CD8-positive, alpha-beta memory T cell (primary cell): ENCODE measurements at regions of chr17 and their contacts with region 1.

Region 1: GRCh38 chr17:48878918-48879898 is 13.4 kb upstream of the ATP5MC1 start:
- DNase-seq: peak; percentile 28 to 72 (median 59)
- H3K4me3 ChIP-seq: no peak overlapping the region
- H3K4me3 Mint-ChIP-seq: no peak overlapping the region
- H3K27ac ChIP-seq: no peak overlapping the region
- H3K27ac Mint-ChIP-seq: no peak overlapping the region
- H3K4me1 ChIP-seq: no peaks in the 10 kb centered on the region
- H3K4me1 Mint-ChIP-seq: peaks cover 0 to 7% (median 3%) of the 10 kb centered on the region in 3 donors
- H3K27me3 ChIP-seq: peaks cover 4% of the 10 kb centered on the region
- H3K27me3 Mint-ChIP-seq: peaks cover 8 to 9% of the 10 kb centered on the region in 2 donors

Region 2: DNA sequence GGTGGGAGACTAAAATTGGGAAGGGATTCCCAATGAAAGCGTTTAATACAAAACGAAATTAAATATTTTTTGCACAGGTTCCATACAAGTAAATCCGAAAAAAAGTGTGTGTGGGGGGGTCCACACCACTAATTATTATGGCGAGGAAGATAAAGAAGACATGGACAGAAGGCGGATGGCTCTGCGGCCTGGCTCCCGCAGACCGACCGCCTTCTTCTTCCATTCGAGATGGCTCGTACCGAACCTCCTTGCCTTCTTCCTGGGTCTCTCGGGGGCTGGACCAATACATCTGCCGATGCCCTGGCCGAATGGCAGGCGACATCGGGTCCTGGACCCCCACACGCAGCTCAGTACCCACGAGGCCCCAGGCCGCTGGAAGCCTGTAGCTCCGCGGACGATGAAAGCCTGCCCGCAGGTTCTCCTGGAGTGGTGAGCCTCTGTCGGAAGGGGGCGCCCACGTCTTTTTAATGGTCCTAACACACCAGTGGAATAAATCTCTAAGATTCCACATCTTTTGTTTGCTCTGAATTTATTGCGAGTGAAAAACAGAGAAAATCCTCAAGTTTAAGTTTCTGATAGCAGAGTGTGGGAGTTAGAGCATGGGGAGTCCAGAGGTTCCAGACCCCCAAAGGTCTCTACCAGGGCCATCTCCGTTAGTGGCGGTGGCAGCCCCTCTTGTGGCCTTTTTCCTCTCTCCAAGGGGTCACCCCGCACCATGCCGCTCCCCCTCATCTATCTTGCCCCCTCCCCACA is 154.8 kb before region 1 on chr17:
- CTCF ChIA-PET with region 1: interaction called, 11 read pairs
- POLR2A ChIA-PET with region 1: interaction called, 6 read pairs
- DNase-seq: peak; percentile 54 to 79 (median 64)
- H3K4me3 ChIP-seq: peak overlapping the region; percentile 33
- H3K4me3 Mint-ChIP-seq: peak overlapping the region; percentile 31 to 79 (median 75)
- H3K27ac ChIP-seq: no peak overlapping the region
- H3K27ac Mint-ChIP-seq: peak overlapping the region in 3 of 8 donors; percentile 38 to 72 (median 70)
- H3K4me1 ChIP-seq: peaks cover 39% of the 10 kb centered on the region
- H3K4me1 Mint-ChIP-seq: peaks cover 40 to 51% (median 43%) of the 10 kb centered on the region in 3 donors
- H3K27me3 ChIP-seq: peaks cover 92% of the 10 kb centered on the region
- H3K27me3 Mint-ChIP-seq: peaks cover 93 to 97% of the 10 kb centered on the region in 2 donors

Region 3: DNA sequence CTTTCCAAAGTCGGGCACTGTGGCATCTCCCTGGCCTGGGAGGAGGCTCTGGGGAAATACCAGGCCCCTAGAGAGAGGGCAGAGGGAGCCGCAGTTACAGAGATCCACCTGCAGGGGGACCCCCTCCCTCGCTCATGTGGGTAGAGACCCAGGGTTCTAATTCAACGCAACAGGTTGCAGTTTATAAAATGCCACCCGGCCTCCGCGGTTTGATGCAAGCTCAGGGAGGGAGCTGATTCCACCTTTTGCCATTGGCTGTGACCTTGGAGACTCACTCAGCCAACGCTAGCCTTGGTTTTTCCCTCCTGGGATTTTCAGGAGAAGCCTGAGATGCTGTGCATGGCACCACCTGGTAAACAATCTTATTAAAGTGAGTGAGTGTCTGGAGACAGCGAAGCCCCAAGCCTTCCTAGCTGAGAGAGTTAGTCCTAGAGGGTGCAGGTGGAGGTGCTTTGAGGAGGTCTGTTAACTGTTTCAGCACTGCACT is 74.2 kb before region 1 on chr17:
- CTCF ChIA-PET with region 1: interaction called, 214 read pairs
- POLR2A ChIA-PET with region 1: interaction called, 5 read pairs
- DNase-seq: peak; percentile 45 to 67 (median 57)
- H3K4me3 ChIP-seq: no peak overlapping the region
- H3K4me3 Mint-ChIP-seq: peak overlapping the region in 1 of 7 donors; percentile 55
- H3K27ac ChIP-seq: no peak overlapping the region
- H3K27ac Mint-ChIP-seq: no peak overlapping the region
- H3K4me1 ChIP-seq: no peaks in the 10 kb centered on the region
- H3K4me1 Mint-ChIP-seq: peaks cover 0 to 2% (median 0%) of the 10 kb centered on the region in 3 donors
- H3K27me3 ChIP-seq: peaks cover 5% of the 10 kb centered on the region
- H3K27me3 Mint-ChIP-seq: peaks cover 6 to 14% of the 10 kb centered on the region in 2 donors

Region 4: DNA sequence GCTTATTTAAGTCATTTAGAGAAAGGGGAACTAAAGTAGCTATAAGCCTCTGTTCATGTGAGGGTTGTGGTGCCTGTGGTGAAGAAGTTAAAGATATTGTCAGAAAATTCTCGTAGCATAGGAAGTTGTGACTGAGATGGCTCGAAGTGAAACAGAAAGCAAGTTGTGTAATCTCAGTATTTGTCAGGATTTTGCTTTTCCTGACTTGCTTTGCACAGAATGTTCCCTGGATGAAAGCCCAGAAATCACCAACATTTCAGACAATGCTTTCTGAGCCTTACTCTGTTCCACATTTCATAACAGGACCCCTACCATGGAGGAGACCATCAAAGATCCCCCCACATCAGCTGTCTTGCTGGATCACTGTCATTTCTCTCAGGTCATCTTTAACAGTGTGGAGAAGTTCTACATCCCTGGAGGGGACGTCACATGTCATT is 37.8 kb before region 1 on chr17:
- CTCF ChIA-PET with region 1: interaction called, 16 read pairs
- POLR2A ChIA-PET with region 1: no interaction called
- DNase-seq: peak in 3 of 5 donors; percentile 50 to 59 (median 58)
- H3K4me3 ChIP-seq: peak overlapping the region; percentile 54
- H3K4me3 Mint-ChIP-seq: peak overlapping the region; percentile 62 to 89 (median 86)
- H3K27ac ChIP-seq: peak overlapping the region; percentile 34
- H3K27ac Mint-ChIP-seq: peak overlapping the region; percentile 84 to 97 (median 94)
- H3K4me1 ChIP-seq: peaks cover 56% of the 10 kb centered on the region
- H3K4me1 Mint-ChIP-seq: peaks cover 46 to 63% (median 52%) of the 10 kb centered on the region in 3 donors
- H3K27me3 ChIP-seq: no peaks in the 10 kb centered on the region
- H3K27me3 Mint-ChIP-seq: no peaks in the 10 kb centered on the region

Region 5: DNA sequence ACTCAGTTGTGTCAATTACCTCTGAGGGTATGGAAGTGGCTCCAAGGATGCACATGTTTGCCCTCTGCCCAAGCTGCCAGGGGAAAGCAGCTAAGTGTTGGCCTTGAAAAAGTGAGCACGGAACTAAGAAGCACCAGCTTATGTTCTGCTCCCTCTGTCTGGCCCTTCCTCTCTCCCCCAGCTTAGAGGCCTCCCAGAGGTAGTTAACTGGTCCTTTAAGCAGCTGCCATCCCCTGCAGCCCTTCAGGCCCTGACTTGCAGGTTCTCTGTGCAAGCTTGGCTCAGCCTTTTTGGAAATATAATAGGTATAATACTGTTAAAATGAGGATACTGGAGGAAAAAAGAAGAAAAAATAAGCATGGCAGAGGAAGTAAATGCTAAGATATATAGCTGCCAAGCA is 22.0 kb after region 1 on chr17:
- CTCF ChIA-PET with region 1: interaction called, 13 read pairs
- POLR2A ChIA-PET with region 1: no interaction called
- DNase-seq: no peak
- H3K4me3 ChIP-seq: no peak overlapping the region
- H3K4me3 Mint-ChIP-seq: peak overlapping the region in 1 of 7 donors; percentile 16
- H3K27ac ChIP-seq: no peak overlapping the region
- H3K27ac Mint-ChIP-seq: no peak overlapping the region
- H3K4me1 ChIP-seq: no peaks in the 10 kb centered on the region
- H3K4me1 Mint-ChIP-seq: no peaks in the 10 kb centered on the region
- H3K27me3 ChIP-seq: no peaks in the 10 kb centered on the region
- H3K27me3 Mint-ChIP-seq: no peaks in the 10 kb centered on the region